ENCODE measurements at regions of chr6 and their contacts with region 1.

Region 1: GRCh38 chr6:84284428-84285049 is 57.1 kb upstream of the CEP162 start:
- DNase-seq: peak; percentile 35
- ATAC-seq: peak; percentile 63
- H3K4me3 ChIP-seq: no peak overlapping the region
- H3K27ac ChIP-seq: no peak overlapping the region
- H3K4me1 ChIP-seq: no peaks in the 10 kb centered on the region
- H3K27me3 ChIP-seq: peaks cover 35% of the 10 kb centered on the region
- CTCF ChIP-seq: peak; percentile 66

Region 2: DNA sequence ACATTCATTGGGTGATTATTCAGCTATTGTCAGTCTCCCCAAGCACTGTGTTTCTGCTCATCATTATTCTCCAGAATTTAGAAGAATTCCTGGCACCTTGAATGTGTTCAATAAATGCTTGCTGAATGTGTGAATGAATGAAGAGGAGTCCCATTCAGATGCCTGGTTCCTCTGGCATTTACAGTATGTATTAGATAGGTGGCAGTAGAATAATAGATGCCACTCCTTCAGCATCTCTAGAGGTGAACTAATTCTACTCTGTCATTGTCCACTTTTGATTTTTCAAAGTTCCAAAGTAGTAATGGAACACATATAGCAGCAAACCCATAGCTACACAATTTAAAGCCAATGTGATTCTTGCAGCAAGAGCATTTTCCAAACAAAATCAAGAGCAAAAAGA is 61.8 kb after region 1 on chr6:
- CTCF ChIA-PET with region 1: no interaction called
- POLR2A ChIA-PET with region 1: no interaction called
- intact Hi-C with region 1: no loop called
- DNase-seq: peak; percentile 11
- ATAC-seq: peak; percentile 56
- H3K4me3 ChIP-seq: no peak overlapping the region
- H3K27ac ChIP-seq: no peak overlapping the region
- H3K4me1 ChIP-seq: no peaks in the 10 kb centered on the region
- H3K27me3 ChIP-seq: no peaks in the 10 kb centered on the region
- CTCF ChIP-seq: peak; percentile 59

Region 3: DNA sequence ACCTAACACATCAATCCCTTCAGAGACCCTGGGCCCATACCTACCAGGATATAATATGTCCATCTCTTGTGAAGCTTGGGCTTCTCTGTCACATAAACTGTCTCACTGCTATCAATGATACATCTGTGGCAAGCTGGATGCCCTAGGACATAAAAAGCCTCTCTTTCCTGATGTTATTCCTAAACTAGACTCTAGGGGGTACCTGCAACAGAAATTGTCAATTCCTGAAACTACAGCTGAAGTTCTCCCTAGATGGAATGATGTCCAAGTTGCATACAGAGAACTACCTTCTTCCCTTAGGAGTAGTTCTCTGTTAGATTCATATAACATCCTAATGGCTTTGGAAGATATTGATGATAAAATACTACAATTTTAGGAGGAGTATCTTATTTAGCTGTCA is 444.1 kb after region 1 on chr6:
- CTCF ChIA-PET with region 1: no interaction called
- POLR2A ChIA-PET with region 1: no interaction called
- intact Hi-C with region 1: no loop called
- DNase-seq: peak; percentile 53
- ATAC-seq: peak; percentile 27; the same call in 1 of the 2 replicates
- H3K4me3 ChIP-seq: no peak overlapping the region
- H3K27ac ChIP-seq: no peak overlapping the region
- H3K4me1 ChIP-seq: no peaks in the 10 kb centered on the region
- H3K27me3 ChIP-seq: peaks cover 16% of the 10 kb centered on the region; the same call in 1 of the 2 replicates
- CTCF ChIP-seq: peak; percentile 59

Region 4: GRCh38 chr6:84779380-84779779 is 494.8 kb after region 1 on chr6:
- CTCF ChIA-PET with region 1: no interaction called
- POLR2A ChIA-PET with region 1: no interaction called
- intact Hi-C with region 1: loop called (anchors 5 kb)
- DNase-seq: peak; percentile 6
- ATAC-seq: no peak
- H3K4me3 ChIP-seq: no peak overlapping the region
- H3K27ac ChIP-seq: no peak overlapping the region
- H3K4me1 ChIP-seq: no peaks in the 10 kb centered on the region
- H3K27me3 ChIP-seq: peaks cover 49% of the 10 kb centered on the region
- CTCF ChIP-seq: peak; percentile 30; the same call in 1 of the 2 replicates

Measured in PC-3 (cell line).